Heart left ventricle (tissue), 16 donors: ENCODE measurements at regions of chr1 and their contacts with region 1.

Region 1: DNA sequence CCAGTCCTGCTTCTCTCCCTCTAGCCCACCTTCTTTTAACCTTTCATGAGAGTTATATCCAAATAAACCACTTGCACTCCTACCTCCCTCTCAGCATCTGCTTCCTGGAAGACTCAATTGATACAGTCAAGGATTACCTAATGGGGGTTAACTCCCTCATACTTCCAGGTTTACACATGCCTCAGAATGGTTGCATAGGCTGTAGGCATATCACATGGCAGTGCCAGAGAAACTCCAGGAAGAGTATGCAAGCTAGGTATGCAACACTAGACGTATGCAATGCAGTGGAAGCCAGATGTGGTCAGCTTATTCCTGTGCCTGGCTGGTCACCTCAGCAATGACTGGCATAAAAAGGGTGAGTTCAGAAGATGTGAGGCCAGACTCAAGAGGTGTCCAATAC is 32.7 kb upstream of the VANGL1 start:
- DNase-seq: no peak
- ATAC-seq: no peak
- H3K4me3 ChIP-seq: no peak overlapping the region
- H3K27ac ChIP-seq: no peak overlapping the region
- H3K4me1 ChIP-seq: peaks cover 0 to 6% (median 0%) of the 10 kb centered on the region in 12 donors
- H3K27me3 ChIP-seq: no peaks in the 10 kb centered on the region
- CTCF ChIP-seq: no peak
- POLR2A ChIP-seq: no peak

Region 2: GRCh38 chr1:115677182-115677555 is 68.1 kb after region 1 on chr1:
- intact Hi-C with region 1: loop called in 1 of 10 experiments (anchors 2 kb)
- DNase-seq: no peak
- ATAC-seq: no peak
- H3K4me3 ChIP-seq: no peak overlapping the region
- H3K27ac ChIP-seq: no peak overlapping the region
- H3K4me1 ChIP-seq: peaks cover 0 to 57% (median 31%) of the 10 kb centered on the region in 12 donors
- H3K27me3 ChIP-seq: no peaks in the 10 kb centered on the region
- CTCF ChIP-seq: no peak
- POLR2A ChIP-seq: no peak

Region 3: GRCh38 chr1:115706587-115707425 is 97.8 kb after region 1 on chr1:
- intact Hi-C with region 1: loop called (anchors 2 to 5 kb)
- DNase-seq: no peak
- ATAC-seq: peak; percentile 10 to 43 (median 14)
- H3K4me3 ChIP-seq: no peak overlapping the region
- H3K27ac ChIP-seq: peak overlapping the region in 1 of 12 donors; percentile 61
- H3K4me1 ChIP-seq: peaks cover 0 to 73% (median 22%) of the 10 kb centered on the region in 12 donors
- H3K27me3 ChIP-seq: peaks cover 0 to 3% (median 0%) of the 10 kb centered on the region in 9 donors
- CTCF ChIP-seq: peak; percentile 53 to 83 (median 73)
- POLR2A ChIP-seq: no peak

Region 4: GRCh38 chr1:115813727-115814126 is 204.7 kb after region 1 on chr1:
- intact Hi-C with region 1: no loop called
- DNase-seq: no peak
- ATAC-seq: peak in 1 of 4 donors; percentile 48
- H3K4me3 ChIP-seq: no peak overlapping the region
- H3K27ac ChIP-seq: no peak overlapping the region
- H3K4me1 ChIP-seq: peaks cover 0 to 25% (median 1%) of the 10 kb centered on the region in 12 donors
- H3K27me3 ChIP-seq: no peaks in the 10 kb centered on the region
- CTCF ChIP-seq: no peak
- POLR2A ChIP-seq: no peak

Region 5: DNA sequence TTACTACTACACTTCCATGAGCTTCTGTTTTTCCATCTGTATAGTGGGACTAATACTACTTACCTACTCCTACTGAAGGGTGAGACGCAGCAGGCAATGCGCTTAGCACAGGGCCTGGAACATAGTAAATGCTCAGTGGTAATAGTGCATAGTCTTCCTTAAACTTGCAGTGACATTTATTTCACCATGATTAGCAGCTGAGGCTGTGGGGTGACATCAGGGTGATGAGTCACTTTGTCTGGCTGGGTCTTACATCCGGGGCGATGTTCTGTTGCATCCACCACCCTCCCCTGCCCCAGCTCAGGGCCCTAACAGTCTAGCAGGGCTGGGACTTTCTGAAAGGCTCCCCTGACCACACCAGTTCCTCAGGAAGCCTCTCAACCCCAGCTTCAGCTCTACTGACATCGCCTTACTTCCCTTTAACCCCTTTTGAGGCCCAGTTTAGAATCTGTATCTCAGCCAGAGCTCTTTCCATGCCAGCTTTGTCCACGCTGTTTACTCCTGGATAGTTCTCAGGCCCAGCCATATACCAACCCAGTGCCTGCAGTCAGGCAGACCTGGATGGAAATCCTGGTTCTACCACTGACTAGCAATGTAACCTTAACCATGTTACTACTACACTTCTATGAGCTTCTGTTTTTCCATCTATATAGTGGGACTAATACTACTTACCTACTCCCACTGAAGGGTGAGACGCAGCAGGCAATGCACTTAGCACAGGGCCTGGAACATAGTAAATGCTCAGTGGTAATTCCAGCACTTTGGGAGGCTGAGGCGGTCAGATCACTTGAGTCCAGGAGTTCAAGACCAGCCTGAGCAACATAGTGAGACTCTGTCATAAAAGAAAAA is 895.5 kb after region 1 on chr1:
- intact Hi-C with region 1: loop called in 1 of 10 experiments (anchors 5 kb)
- DNase-seq: peak; percentile 60 to 86 (median 80)
- ATAC-seq: peak; percentile 41 to 89 (median 82)
- H3K4me3 ChIP-seq: no peak overlapping the region
- H3K27ac ChIP-seq: peak overlapping the region in 11 of 12 donors; percentile 22 to 91 (median 57)
- H3K4me1 ChIP-seq: peaks cover 0 to 71% (median 12%) of the 10 kb centered on the region in 12 donors
- H3K27me3 ChIP-seq: no peaks in the 10 kb centered on the region
- CTCF ChIP-seq: no peak
- POLR2A ChIP-seq: no peak